K562 (cell line): ENCODE measurements at regions of chr11 and their contacts with region 1.

Region 1: DNA sequence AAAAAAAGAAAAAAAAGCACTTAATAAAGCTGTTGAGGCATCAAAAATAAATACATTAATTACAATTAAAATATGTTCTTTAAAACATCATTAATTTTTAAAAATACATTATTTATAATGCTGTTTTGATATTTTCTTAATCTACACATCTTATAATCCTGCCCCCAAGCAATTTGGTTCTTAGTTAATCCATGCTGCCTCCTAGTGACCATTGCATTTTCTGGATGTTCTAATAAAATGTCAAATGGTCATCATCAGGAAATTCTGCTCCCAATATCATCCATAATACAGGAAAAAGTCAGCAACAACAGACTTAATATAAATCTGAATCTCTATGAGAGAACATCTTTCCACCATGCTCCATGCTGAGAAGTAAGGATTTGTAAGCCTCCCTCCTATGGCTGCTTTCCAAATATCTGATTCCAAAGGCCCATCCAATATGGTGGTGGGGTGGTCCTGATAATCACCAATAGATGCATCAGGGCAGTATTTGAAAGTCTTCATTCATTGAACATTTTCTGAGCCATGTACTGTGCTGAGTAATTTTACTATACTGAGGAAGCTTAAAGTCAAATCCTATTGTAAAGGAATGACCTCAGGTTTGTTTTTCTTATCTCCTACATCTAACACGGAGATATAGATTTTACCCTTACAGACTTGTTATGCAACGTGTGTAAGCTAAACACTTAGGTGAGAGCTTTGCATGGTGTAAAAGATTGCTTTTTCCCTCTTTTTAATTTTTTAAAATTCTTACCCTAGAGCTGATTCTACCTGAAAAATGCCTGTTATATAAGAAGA is 124.7 kb upstream of the BMAL1 start:
- DNase-seq: peak in 2 of 4 experiments; percentile 33 to 44
- ATAC-seq: 0 out of 3 replicates have a peak, but pooled peaks have one; percentile 37
- H3K4me3 ChIP-seq: no peak overlapping the region
- H3K27ac ChIP-seq: no peak overlapping the region
- H3K4me1 ChIP-seq: no peaks in the 10 kb centered on the region
- H3K27me3 ChIP-seq: no peaks in the 10 kb centered on the region
- CTCF ChIP-seq: peak; percentile 44 to 77 (median 52); a peak in 4 of 6 replicates
- EP300 ChIP-seq: no peak
- POLR2A ChIP-seq: no peak
- RAD21 ChIP-seq: peak; percentile 74 to 84

Region 2: GRCh38 chr11:13016415-13016814 is 136.5 kb before region 1 on chr11:
- CTCF ChIA-PET with region 1: no interaction called
- POLR2A ChIA-PET with region 1: no interaction called
- in situ Hi-C with region 1: no loop called
- intact Hi-C with region 1: loop called (anchors 2 kb)
- DNase-seq: peak in 1 of 4 experiments; percentile 18
- ATAC-seq: peak; percentile 58; the same call in 2 of the 3 replicates
- H3K4me3 ChIP-seq: no peak overlapping the region
- H3K27ac ChIP-seq: no peak overlapping the region
- H3K4me1 ChIP-seq: peaks cover 0 to 7% of the 10 kb centered on the region in 2 experiments; a peak in 4 of 5 replicates
- H3K27me3 ChIP-seq: peaks cover 0 to 5% of the 10 kb centered on the region in 2 experiments; a peak in 3 of 5 replicates
- CTCF ChIP-seq: peak in 2 of 3 experiments; percentile 31 to 48; a peak in 3 of 6 replicates
- EP300 ChIP-seq: no peak
- POLR2A ChIP-seq: no peak
- RAD21 ChIP-seq: peak; percentile 32 to 65; a peak in 3 of 4 replicates